ENCODE measurements at regions of chr9 and their contacts with region 1.

Region 1: GRCh38 chr9:15295761-15296405 is 11.1 kb downstream of the TTC39B start:
- DNase-seq: peak in 1 of 2 donors; percentile 61
- ATAC-seq: peak; percentile 68
- H3K4me3 ChIP-seq: peak overlapping the region; percentile 28 to 74
- H3K27ac ChIP-seq: peak overlapping the region; percentile 88 to 92
- H3K4me1 ChIP-seq: peaks cover 2 to 5% of the 10 kb centered on the region in 2 donors
- H3K27me3 ChIP-seq: no peaks in the 10 kb centered on the region

Region 2: GRCh38 chr9:15211160-15211814 is 84.6 kb before region 1 on chr9:
- intact Hi-C with region 1: loop called in 1 of 2 experiments (anchors 5 kb)
- DNase-seq: peak in 1 of 2 donors; percentile 46
- ATAC-seq: peak; percentile 89
- H3K4me3 ChIP-seq: peak overlapping the region in 1 of 2 donors; percentile 16
- H3K27ac ChIP-seq: peak overlapping the region; percentile 46 to 84
- H3K4me1 ChIP-seq: peaks cover 0 to 7% of the 10 kb centered on the region in 2 donors
- H3K27me3 ChIP-seq: no peaks in the 10 kb centered on the region

Region 3: GRCh38 chr9:15249042-15249818 is 46.7 kb before region 1 on chr9:
- intact Hi-C with region 1: loop called in 1 of 2 experiments (anchors 10 kb)
- DNase-seq: no peak
- ATAC-seq: peak; percentile 47
- H3K4me3 ChIP-seq: peak overlapping the region; percentile 21 to 30
- H3K27ac ChIP-seq: peak overlapping the region; percentile 53 to 77
- H3K4me1 ChIP-seq: peaks cover under 1 to 19% of the 10 kb centered on the region in 2 donors
- H3K27me3 ChIP-seq: no peaks in the 10 kb centered on the region

Region 4: GRCh38 chr9:15444142-15444541 is 148.3 kb after region 1 on chr9:
- intact Hi-C with region 1: no loop called
- DNase-seq: no peak
- ATAC-seq: no peak
- H3K4me3 ChIP-seq: no peak overlapping the region
- H3K27ac ChIP-seq: no peak overlapping the region
- H3K4me1 ChIP-seq: no peaks in the 10 kb centered on the region
- H3K27me3 ChIP-seq: no peaks in the 10 kb centered on the region

Region 5: GRCh38 chr9:15485836-15486666 is 190.2 kb after region 1 on chr9:
- intact Hi-C with region 1: loop called in 1 of 2 experiments (anchors 10 kb)
- DNase-seq: no peak
- ATAC-seq: no peak
- H3K4me3 ChIP-seq: no peak overlapping the region
- H3K27ac ChIP-seq: no peak overlapping the region
- H3K4me1 ChIP-seq: no peaks in the 10 kb centered on the region
- H3K27me3 ChIP-seq: no peaks in the 10 kb centered on the region

Measured in aorta (tissue), 5 donors.